ENCODE measurements at regions of chr5 and their contacts with region 1.

Region 1: DNA sequence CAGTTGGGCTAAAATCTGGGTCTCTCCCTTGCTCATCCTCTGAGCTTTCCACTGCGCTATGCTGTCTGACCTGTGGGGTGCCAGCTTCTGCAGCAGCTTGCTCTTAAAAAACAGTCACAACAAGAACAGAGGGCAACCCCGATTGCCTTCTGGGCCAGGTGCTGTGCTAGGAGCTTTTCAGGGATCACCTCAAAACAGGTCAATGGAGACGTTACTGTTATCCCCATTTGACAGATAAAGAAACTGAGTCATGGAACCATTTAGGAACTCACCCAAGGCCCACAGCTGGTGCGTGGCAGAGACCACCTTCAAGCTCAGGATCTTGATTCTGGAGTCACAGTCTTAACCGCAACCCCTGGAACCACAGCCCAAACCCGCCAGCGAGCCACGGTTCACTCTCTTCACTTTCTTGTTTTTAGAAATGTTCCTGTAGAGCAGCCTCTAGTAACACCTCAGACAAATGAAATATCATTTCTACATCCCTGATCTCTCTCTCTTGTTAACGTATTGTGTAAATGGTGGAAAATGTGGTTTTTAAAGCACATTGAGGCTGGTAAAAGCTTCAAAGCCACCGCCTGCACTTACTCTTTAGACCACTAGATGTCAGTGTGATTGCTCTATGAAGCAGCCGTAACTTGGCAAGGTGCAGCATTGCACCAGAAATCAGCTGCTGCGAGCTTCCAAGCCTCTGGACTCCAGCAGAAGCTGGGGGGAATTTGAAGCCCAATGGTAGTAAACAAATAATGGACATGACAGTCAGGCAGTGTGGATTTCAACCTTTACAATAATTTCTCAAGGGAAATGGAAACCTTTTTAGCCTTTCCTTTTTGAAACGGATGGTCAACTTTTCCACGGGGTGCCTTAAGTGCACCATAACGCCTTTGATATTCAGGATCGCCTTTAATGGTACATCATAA is 1.7 kb downstream of the FYB1 start:
- DNase-seq: peak; percentile 62 to 91 (median 74)
- ATAC-seq: peak; percentile 62
- H3K4me3 ChIP-seq: peak overlapping the region; percentile 65
- H3K4me3 Mint-ChIP-seq: peak overlapping the region; percentile 83
- H3K27ac ChIP-seq: peak overlapping the region; percentile 72 to 83
- H3K27ac Mint-ChIP-seq: peak overlapping the region; percentile 96
- H3K4me1 ChIP-seq: peaks cover 58% of the 10 kb centered on the region
- H3K4me1 Mint-ChIP-seq: peaks cover 86% of the 10 kb centered on the region
- H3K27me3 ChIP-seq: no peaks in the 10 kb centered on the region
- H3K27me3 Mint-ChIP-seq: no peaks in the 10 kb centered on the region
- CTCF ChIP-seq: peak; percentile 96

Region 2: DNA sequence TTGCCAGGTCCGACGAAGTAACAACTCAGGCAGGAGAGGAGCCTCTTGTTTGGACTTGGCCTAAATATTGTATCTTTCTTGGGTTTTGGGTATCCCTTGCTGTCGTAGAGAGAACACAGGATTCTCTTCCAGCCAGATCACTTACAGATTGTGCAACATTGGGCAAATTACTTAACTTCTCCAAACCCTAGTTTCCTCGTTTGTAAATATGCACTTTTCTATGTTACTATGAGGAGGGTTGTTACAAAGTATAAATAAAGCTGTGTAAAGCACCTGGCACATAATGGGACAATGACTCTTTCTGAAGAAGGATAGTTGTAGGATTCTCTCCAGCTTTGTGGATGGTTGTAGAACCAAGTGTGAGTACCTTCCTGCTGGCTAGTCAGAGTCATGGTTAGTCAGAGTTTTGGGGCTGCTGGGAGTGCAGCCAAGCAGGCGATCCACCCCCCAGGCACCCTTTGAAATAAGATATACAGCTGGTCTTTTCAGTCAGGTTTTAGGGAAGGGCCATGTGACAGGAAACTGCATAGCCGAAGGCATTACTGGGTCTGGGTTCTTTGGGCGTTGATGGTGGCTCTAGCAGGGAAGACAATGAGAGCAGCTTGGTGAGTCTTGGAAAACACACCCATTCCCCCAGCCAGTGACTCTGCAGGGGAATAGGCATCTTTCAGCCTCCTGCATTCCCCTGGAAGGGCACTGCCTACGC is 1327.9 kb before region 1 on chr5:
- CTCF ChIA-PET with region 1: no interaction called
- POLR2A ChIA-PET with region 1: no interaction called
- intact Hi-C with region 1: no loop called
- DNase-seq: no peak
- ATAC-seq: no peak
- H3K4me3 ChIP-seq: no peak overlapping the region
- H3K4me3 Mint-ChIP-seq: no peak overlapping the region
- H3K27ac ChIP-seq: no peak overlapping the region
- H3K27ac Mint-ChIP-seq: no peak overlapping the region
- H3K4me1 ChIP-seq: no peaks in the 10 kb centered on the region
- H3K4me1 Mint-ChIP-seq: no peaks in the 10 kb centered on the region
- H3K27me3 ChIP-seq: peaks cover 0 to 3% of the 10 kb centered on the region in 2 experiments
- H3K27me3 Mint-ChIP-seq: no peaks in the 10 kb centered on the region
- CTCF ChIP-seq: no peak

Region 3: DNA sequence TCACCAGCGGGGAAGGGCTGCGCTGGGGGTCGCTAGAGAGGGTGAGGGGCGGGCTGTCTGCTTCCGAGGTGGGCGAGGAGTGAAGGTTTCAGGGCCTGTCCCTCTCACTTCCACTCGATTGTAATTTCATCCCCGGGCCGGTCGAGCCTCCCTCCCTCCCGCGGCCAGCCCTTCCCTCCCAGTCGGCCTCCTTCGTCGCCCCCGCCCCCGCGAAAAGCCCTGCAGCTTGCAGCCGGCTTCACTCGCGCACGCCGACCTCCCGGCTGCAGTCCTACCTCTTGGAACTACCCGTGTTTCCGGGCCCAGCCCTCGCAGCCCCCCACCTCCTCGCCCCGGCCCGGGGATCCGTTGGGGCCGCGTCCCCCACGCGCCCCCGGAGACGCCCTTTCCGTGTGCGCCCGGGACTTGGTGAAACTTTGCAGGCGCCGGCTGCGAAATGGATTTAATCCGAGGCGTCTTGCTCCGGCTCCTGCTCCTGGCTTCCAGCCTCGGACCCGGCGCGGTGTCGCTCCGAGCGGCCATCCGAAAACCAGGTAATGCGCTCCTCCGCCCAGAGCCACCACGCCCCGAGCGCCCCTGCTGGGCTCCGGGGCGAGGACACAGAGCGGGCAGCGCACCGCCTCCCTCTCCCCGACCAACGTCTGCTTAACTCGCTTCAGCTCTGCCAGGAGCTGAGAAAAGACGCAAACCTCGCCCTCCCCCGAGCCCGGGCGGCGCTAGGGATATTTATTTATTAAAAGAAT is 959.1 kb before region 1 on chr5 and contains the start of gene EGFLAM:
- CTCF ChIA-PET with region 1: no interaction called
- POLR2A ChIA-PET with region 1: no interaction called
- intact Hi-C with region 1: no loop called
- DNase-seq: no peak
- ATAC-seq: no peak
- H3K4me3 ChIP-seq: no peak within 1 kb of the TSS
- H3K4me3 Mint-ChIP-seq: no peak within 1 kb of the TSS
- H3K27ac ChIP-seq: no peak within 1 kb of the TSS
- H3K27ac Mint-ChIP-seq: no peak within 1 kb of the TSS
- H3K4me1 ChIP-seq: peaks cover 16% of the 10 kb centered on the region
- H3K4me1 Mint-ChIP-seq: peaks cover 17% of the 10 kb centered on the region
- H3K27me3 ChIP-seq: peaks cover 37 to 70% of the 10 kb centered on the region in 2 experiments
- H3K27me3 Mint-ChIP-seq: peaks cover 88% of the 10 kb centered on the region
- CTCF ChIP-seq: no peak
- total RNA-seq, gene EGFLAM: not detected

Region 4: GRCh38 chr5:38994324-38994927 is 223.2 kb before region 1 on chr5:
- CTCF ChIA-PET with region 1: no interaction called
- POLR2A ChIA-PET with region 1: no interaction called
- intact Hi-C with region 1: loop called in 1 of 2 experiments (anchors 5 kb)
- DNase-seq: peak in 9 of 14 experiments; percentile 2 to 72 (median 26)
- ATAC-seq: peak; percentile 75
- H3K4me3 ChIP-seq: no peak overlapping the region
- H3K4me3 Mint-ChIP-seq: no peak overlapping the region
- H3K27ac ChIP-seq: no peak overlapping the region
- H3K27ac Mint-ChIP-seq: no peak overlapping the region
- H3K4me1 ChIP-seq: no peaks in the 10 kb centered on the region
- H3K4me1 Mint-ChIP-seq: peaks cover 45% of the 10 kb centered on the region
- H3K27me3 ChIP-seq: no peaks in the 10 kb centered on the region
- H3K27me3 Mint-ChIP-seq: no peaks in the 10 kb centered on the region
- CTCF ChIP-seq: peak; percentile 53

Region 5: DNA sequence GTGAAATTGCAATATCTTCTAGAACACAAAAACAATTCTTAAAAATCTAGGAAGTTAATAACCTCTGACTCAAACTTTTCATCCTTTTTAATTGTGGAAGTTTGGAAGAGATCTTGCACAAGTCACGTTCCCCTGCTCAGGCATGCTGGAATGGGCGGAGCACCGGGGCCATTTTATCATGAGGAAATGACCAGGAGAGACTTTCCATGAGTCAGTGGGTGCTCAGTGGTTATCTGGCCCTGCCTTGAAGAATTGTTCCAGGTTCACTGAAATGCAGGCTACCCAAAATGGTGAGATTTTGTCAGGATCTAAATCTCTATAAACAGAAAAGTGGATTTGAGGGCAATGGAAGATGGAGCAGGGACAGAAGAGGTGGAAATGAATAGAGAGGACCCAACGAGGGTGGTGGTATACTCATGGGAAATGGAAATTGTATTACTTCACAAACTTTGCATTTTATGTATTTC is 59.5 kb before region 1 on chr5:
- CTCF ChIA-PET with region 1: interaction called, 22 read pairs
- POLR2A ChIA-PET with region 1: interaction called, 16 read pairs
- intact Hi-C with region 1: no loop called
- DNase-seq: peak in 2 of 14 experiments; percentile 28 to 31
- ATAC-seq: no peak
- H3K4me3 ChIP-seq: no peak overlapping the region
- H3K4me3 Mint-ChIP-seq: peak overlapping the region; percentile 69
- H3K27ac ChIP-seq: peak overlapping the region; percentile 7 to 55
- H3K27ac Mint-ChIP-seq: peak overlapping the region; percentile 96
- H3K4me1 ChIP-seq: peaks cover 54% of the 10 kb centered on the region
- H3K4me1 Mint-ChIP-seq: peaks cover 91% of the 10 kb centered on the region
- H3K27me3 ChIP-seq: no peaks in the 10 kb centered on the region
- H3K27me3 Mint-ChIP-seq: no peaks in the 10 kb centered on the region
- CTCF ChIP-seq: no peak

Region 6: DNA sequence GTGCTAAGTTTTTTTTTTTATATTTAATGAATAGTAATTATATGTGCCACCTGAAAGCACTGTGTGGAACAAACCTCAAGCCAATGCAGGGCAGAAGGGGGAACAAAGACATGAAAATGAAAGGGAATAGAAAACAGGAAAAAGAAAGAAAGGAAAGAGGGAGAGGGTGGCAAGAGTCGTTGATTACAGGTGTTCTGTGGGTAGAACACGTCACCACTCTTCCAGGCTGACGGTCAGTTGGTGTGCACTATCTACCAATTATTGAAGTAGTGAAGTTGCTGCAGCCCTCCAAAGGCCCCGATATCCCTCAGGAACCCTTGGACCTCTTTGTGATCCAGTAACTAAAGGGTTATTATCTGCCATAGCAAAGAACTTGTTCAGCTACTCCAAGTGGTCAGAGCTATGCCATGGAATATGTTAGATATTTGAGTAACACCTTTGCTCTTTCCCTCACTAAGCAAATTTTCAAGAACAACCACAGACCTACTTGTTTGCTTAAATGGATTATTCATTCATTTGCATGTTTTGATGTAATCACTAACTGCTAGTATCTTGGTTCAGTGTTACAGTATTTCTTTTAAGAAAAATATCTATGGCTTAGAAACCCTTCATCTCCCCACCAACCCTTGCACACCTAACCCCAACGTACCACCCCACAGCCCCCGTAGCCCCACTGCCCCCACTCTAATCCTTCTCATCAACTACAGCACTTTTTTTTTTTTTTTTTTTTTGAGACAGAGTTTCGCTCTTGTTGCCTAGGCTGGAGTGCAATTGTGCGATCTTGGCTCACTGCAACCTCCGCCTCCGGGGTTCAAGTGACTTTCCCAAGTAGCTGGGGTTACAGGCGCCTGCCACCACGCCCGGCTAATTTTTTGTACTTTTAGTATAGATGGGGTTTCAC is 29.5 kb before region 1 on chr5:
- CTCF ChIA-PET with region 1: interaction called, 140 read pairs
- POLR2A ChIA-PET with region 1: interaction called, 209 read pairs
- intact Hi-C with region 1: no loop called
- DNase-seq: peak in 6 of 14 experiments; percentile 36 to 63 (median 54)
- ATAC-seq: peak; percentile 37
- H3K4me3 ChIP-seq: peak overlapping the region; percentile 46
- H3K4me3 Mint-ChIP-seq: peak overlapping the region; percentile 91
- H3K27ac ChIP-seq: peak overlapping the region; percentile 67 to 79
- H3K27ac Mint-ChIP-seq: peak overlapping the region; percentile 96
- H3K4me1 ChIP-seq: peaks cover 53% of the 10 kb centered on the region
- H3K4me1 Mint-ChIP-seq: peaks cover 97% of the 10 kb centered on the region
- H3K27me3 ChIP-seq: no peaks in the 10 kb centered on the region
- H3K27me3 Mint-ChIP-seq: no peaks in the 10 kb centered on the region
- CTCF ChIP-seq: no peak

Region 7: DNA sequence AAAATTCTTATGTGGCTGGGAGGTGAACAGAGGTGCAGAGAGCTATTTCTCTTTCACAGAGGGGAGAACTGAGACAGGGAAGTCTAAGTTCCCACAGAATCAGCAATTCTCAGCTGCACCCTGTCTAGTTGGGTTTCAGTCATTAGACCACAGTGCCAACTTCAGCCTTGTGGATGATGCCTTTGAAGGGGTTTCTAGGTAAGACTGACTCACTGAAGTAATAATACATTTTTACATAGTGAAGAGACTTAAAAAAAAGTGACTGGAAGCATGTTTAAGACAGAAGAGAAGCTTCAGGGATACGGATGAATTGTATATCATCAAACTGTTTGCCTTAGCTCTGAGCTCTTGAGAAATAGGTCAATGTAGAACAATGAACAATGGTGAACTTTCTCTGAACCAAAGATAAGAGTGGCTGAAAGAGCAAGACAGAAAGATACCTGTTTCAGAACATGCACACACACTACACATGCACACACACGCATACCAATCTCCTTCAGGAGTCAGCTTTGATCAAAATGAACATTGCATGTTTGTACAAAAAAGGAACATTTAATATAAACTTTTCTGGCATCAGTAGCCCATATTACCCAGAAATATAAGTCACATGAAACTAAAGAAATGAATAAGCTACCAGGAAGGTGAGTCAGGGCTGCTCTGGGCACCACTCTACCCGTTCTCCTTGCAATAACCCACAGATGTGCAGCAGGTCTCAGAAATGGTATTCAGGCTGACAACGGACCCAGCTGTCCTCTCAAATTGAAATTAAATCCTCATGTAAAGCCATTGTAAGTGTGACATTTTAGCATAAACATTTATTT is 14.3 kb after region 1 on chr5:
- CTCF ChIA-PET with region 1: interaction called, 24 read pairs
- POLR2A ChIA-PET with region 1: interaction called, 8 read pairs
- intact Hi-C with region 1: no loop called
- DNase-seq: peak in 1 of 14 experiments; percentile 33
- ATAC-seq: peak; percentile 73
- H3K4me3 ChIP-seq: no peak overlapping the region
- H3K4me3 Mint-ChIP-seq: no peak overlapping the region
- H3K27ac ChIP-seq: no peak overlapping the region
- H3K27ac Mint-ChIP-seq: no peak overlapping the region
- H3K4me1 ChIP-seq: peaks cover 9% of the 10 kb centered on the region
- H3K4me1 Mint-ChIP-seq: peaks cover 21% of the 10 kb centered on the region
- H3K27me3 ChIP-seq: no peaks in the 10 kb centered on the region
- H3K27me3 Mint-ChIP-seq: no peaks in the 10 kb centered on the region
- CTCF ChIP-seq: no peak

Region 8: GRCh38 chr5:39319395-39319794 is 101.8 kb after region 1 on chr5:
- CTCF ChIA-PET with region 1: no interaction called
- POLR2A ChIA-PET with region 1: no interaction called
- intact Hi-C with region 1: no loop called
- DNase-seq: no peak
- ATAC-seq: no peak
- H3K4me3 ChIP-seq: no peak overlapping the region
- H3K4me3 Mint-ChIP-seq: no peak overlapping the region
- H3K27ac ChIP-seq: no peak overlapping the region
- H3K27ac Mint-ChIP-seq: no peak overlapping the region
- H3K4me1 ChIP-seq: no peaks in the 10 kb centered on the region
- H3K4me1 Mint-ChIP-seq: no peaks in the 10 kb centered on the region
- H3K27me3 ChIP-seq: peaks cover 0 to 5% of the 10 kb centered on the region in 2 experiments
- H3K27me3 Mint-ChIP-seq: peaks cover 17% of the 10 kb centered on the region
- CTCF ChIP-seq: no peak

Region 9: DNA sequence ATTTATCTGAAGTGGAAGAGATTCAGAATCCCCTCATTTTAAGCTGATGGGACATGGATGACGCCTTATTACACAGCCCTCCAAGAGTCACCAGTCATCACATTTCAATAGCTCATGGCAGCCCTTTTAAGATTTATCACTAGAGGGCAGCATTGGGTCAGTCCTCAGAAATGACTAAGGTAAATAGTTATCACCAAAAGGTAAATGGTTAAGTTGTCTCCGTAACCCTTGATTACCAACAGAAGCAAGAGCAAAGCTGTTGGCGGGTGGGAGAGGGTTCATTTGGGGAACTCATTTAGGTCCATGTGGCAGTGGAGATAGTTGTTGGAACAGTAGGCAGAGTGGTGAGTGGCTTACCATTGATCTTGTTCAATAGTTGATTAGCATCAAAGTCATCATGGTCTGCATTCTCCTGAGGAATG is 158.7 kb after region 1 on chr5:
- CTCF ChIA-PET with region 1: interaction called, 4 read pairs
- POLR2A ChIA-PET with region 1: no interaction called
- intact Hi-C with region 1: loop called in 1 of 2 experiments (anchors 10 kb)
- DNase-seq: peak in 8 of 14 experiments; percentile 1 to 62 (median 18)
- ATAC-seq: peak; percentile 51
- H3K4me3 ChIP-seq: no peak overlapping the region
- H3K4me3 Mint-ChIP-seq: no peak overlapping the region
- H3K27ac ChIP-seq: no peak overlapping the region
- H3K27ac Mint-ChIP-seq: no peak overlapping the region
- H3K4me1 ChIP-seq: no peaks in the 10 kb centered on the region
- H3K4me1 Mint-ChIP-seq: no peaks in the 10 kb centered on the region
- H3K27me3 ChIP-seq: no peaks in the 10 kb centered on the region
- H3K27me3 Mint-ChIP-seq: peaks cover 13% of the 10 kb centered on the region
- CTCF ChIP-seq: peak; percentile 69